Endothelial cell of umbilical vein (primary cell): ENCODE measurements at regions of chr9 and their contacts with region 1.

Region 1: DNA sequence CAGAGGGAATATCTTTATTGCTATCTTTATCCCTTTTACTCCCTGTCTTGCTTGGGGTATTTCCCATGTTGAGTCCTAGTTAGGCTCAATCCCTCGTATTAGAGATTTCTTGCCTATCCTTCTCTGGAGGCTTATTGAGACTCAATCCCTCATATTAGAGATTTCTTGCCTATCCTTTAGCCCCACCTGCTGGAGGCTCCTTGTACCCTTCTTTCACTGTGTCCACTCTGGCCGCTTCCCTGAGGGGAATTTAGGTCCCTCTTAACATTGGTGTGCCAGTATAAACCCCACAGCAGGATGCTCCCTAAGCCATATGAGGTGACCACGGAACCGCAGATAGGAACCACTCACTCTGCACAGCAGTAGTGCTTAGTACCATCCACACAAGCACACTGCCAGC is 110.7 kb upstream of the MAMDC2 start:
- DNase-seq: peak; percentile 44
- H3K4me3 ChIP-seq: no peak overlapping the region
- H3K27ac ChIP-seq: no peak overlapping the region
- H3K4me1 ChIP-seq: no peaks in the 10 kb centered on the region
- H3K27me3 ChIP-seq: peaks cover 4% of the 10 kb centered on the region in 2 experiments
- CTCF ChIP-seq: peak; percentile 28 to 48
- POLR2A ChIP-seq: no peak

Region 2: GRCh38 chr9:69412741-69413150 is 520.2 kb before region 1 on chr9:
- CTCF ChIA-PET with region 1: interaction called, 14 read pairs
- POLR2A ChIA-PET with region 1: no interaction called
- dilution Hi-C with region 1: no loop called
- intact Hi-C with region 1: loop called (anchors 2 kb)
- DNase-seq: peak; percentile 74
- H3K4me3 ChIP-seq: no peak overlapping the region
- H3K27ac ChIP-seq: no peak overlapping the region
- H3K4me1 ChIP-seq: no peaks in the 10 kb centered on the region
- H3K27me3 ChIP-seq: no peaks in the 10 kb centered on the region
- CTCF ChIP-seq: peak; percentile 79 to 81
- POLR2A ChIP-seq: no peak

Region 3: GRCh38 chr9:69745716-69746437 is 187.0 kb before region 1 on chr9:
- CTCF ChIA-PET with region 1: interaction called, 21 read pairs
- POLR2A ChIA-PET with region 1: no interaction called
- dilution Hi-C with region 1: no loop called
- intact Hi-C with region 1: no loop called
- DNase-seq: peak; percentile 34
- H3K4me3 ChIP-seq: no peak overlapping the region
- H3K27ac ChIP-seq: no peak overlapping the region
- H3K4me1 ChIP-seq: peaks cover 3% of the 10 kb centered on the region
- H3K27me3 ChIP-seq: no peaks in the 10 kb centered on the region
- CTCF ChIP-seq: peak in 1 of 2 donors; percentile 8
- POLR2A ChIP-seq: no peak

Region 4: DNA sequence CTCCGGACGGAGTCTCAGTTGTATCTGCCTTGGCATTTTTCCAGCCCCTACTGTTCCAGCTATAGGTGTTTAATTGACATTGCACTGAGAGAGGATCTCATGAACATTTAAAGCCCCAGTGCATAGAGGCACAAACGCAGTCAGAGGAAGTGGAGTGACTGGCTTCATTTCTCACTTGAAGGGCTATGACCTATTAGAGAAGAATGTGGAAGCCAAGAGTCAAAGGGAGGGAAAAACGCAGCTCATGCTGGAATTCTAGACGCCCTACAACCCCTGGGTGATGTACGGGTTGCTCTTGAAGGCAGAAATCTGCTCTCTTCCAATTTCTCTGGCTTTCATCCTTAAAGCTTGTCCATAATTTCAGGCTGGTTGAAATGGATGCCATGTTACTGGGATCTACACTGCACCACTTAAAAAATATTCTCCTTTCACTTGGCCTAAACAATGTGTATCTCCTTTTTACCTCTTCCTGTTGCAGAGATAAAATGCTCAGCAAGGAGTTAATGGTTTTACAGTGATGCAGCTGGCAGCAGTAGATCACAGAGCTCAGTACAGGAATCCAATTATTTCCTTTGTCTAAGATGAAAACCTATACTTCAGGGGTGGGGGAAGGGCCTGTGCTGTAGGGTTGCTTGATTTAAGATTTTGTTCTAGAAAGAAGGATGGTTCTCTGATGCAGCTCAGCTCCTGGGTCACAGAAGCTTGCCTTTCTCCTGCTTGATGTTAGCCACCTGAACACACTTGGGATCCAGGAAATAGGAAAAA is 49.0 kb after region 1 on chr9:
- CTCF ChIA-PET with region 1: no interaction called
- POLR2A ChIA-PET with region 1: no interaction called
- dilution Hi-C with region 1: no loop called
- intact Hi-C with region 1: no loop called
- DNase-seq: peak; percentile 32
- H3K4me3 ChIP-seq: no peak overlapping the region
- H3K27ac ChIP-seq: no peak overlapping the region
- H3K4me1 ChIP-seq: peaks cover 8% of the 10 kb centered on the region
- H3K27me3 ChIP-seq: no peaks in the 10 kb centered on the region
- CTCF ChIP-seq: no peak
- POLR2A ChIP-seq: no peak

Region 5: DNA sequence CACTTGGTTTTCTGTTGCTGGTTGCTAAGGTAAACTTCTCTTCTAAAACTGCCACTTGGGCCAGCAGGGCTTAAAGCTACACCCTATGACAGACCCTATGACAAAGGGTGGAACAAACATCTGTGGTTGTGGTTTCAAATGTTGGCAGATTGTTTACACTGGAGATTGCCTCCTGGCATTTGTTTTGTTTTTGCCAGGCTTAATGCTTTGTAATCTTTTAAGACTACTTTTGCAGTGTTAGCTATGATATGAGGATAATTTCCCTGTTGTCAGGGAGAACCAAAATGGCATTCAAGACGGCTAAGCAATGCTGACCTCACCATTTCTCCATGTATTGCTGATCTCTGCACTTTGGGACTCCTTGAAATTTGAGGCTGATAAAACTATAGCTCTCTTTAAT is 161.0 kb after region 1 on chr9:
- CTCF ChIA-PET with region 1: no interaction called
- POLR2A ChIA-PET with region 1: no interaction called
- dilution Hi-C with region 1: no loop called
- intact Hi-C with region 1: no loop called
- DNase-seq: no peak
- H3K4me3 ChIP-seq: no peak overlapping the region
- H3K27ac ChIP-seq: no peak overlapping the region
- H3K4me1 ChIP-seq: no peaks in the 10 kb centered on the region
- H3K27me3 ChIP-seq: peaks cover 4 to 25% of the 10 kb centered on the region in 2 experiments
- CTCF ChIP-seq: no peak
- POLR2A ChIP-seq: no peak